Prostate gland (tissue), 2 donors: ENCODE measurements at regions of chr2 and their contacts with region 1.

Region 1: DNA sequence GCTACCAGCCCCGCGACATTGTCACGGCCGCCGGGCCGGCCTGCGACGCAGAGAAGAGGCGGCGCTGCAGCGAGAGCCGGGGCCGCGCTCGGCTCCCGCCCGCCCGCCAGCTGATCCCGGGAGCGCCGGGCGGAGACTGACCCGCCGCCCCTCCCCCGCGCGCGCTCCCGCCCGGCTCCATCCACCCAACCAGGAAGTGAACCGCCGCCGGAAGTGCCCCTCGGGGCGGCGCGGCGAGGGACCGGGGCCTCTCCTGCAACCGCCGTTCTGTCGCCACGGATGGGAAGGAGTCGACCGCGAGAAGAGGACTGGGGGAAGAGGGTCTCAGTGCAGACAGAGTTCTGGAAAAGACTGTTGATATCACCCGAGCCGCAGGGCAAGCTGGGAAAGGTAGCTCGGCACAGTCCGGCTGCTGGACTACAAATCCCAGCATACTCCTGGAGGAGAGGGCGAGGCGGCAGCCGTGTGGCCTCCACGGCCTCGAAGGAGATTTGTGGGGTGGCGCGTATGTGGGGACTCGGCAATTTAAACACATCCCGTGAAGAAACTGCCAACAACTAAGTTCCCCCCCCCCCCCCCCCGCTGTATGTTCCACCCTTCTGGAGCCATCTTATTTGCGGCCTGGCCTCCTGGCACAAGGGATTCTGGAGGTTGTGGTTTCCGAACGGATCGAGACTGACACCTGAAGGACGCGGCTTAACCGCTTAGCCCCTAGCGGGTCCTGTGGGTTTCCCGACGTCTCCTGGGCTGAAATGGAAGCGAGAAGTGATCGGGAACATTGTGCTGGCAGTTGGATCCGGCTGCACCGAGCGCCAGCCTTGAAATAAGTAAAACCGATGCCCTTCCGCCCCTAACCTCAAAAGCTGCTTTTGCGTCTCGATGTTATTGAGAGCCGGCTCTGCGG is at the start of gene AAK1:
- DNase-seq: peak; percentile 90
- H3K4me3 ChIP-seq: peak within 1 kb of the TSS; percentile 90 to 94
- H3K27ac ChIP-seq: peak within 1 kb of the TSS; percentile 97
- H3K4me1 ChIP-seq: peaks cover 7% of the 10 kb centered on the region
- H3K27me3 ChIP-seq: no peaks in the 10 kb centered on the region
- CTCF ChIP-seq: peak in 2 of 4 experiments; percentile 14 to 15
- POLR2A ChIP-seq: peak; percentile 81
- total RNA-seq, gene AAK1: 70.7 to 77.3 TPM

Region 2: DNA sequence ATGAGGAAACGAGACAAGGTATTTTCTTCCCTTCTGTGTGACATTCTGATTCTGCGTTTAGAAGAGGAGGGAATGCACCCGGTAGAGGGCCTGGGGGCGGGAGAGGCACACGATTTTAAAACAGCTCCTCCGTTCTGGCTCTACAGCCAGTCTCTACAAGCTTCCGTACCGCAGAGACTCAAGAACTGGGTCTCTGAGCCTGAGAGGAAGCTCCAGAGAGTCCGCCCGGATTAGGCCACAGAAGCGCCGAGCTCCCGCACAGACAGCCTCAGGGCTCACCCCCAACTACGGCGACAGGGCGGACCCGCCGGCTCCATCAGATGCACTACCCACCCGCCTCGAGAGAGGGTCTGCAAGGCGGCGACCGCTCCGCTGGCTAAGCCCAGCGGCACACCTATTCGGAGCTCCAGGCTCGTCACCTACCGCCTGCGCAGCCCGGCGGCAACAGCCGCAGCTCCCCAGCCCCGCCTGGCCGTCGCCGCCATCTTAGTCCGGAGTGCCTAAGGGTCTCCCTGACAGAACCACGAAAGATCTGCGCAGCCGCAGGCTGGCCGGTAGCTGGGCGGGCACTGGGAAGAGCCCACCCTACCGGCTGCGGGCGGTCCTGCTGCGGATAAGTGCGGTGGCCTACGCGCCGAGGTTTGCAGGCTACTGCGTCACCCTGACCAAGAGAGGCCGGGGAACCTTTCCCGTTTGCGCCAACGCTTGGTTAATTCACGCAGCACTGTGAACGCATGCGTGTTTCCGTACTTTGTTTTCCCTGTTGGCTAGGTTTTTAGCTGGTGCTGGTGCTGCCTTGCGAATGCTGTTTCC is 206.7 kb before region 1 on chr2 and contains the start of gene NFU1:
- intact Hi-C with region 1: loop called (anchors 2 kb)
- DNase-seq: peak; percentile 83
- H3K4me3 ChIP-seq: peak within 1 kb of the TSS; percentile 65 to 78
- H3K27ac ChIP-seq: peak within 1 kb of the TSS; percentile 96 to 98
- H3K4me1 ChIP-seq: no peaks in the 10 kb centered on the region
- H3K27me3 ChIP-seq: no peaks in the 10 kb centered on the region
- CTCF ChIP-seq: peak; percentile 28 to 78 (median 58)
- POLR2A ChIP-seq: peak; percentile 79
- total RNA-seq, gene NFU1: 33.4 to 42.0 TPM

Region 3: DNA sequence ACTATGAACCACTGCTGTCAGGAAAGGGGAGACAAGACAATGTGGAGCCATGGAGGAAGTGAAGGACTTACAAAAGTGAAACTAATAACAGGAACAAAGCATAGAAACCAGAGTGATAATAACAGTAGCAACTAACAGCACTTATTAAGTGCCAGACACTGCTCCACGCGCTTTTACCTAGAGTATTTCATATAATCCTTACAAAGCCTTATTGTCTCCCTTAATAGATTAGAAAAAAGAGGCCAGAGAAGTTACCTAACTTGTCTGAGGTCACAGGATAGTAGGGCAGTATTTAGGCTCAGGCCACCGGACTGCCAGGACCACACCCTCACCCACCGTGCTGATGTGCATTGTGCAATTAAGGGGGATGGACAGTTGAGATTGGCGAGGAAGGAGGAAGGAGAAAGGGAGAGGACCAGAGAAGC is 108.0 kb before region 1 on chr2:
- intact Hi-C with region 1: no loop called
- DNase-seq: no peak
- H3K4me3 ChIP-seq: no peak overlapping the region
- H3K27ac ChIP-seq: no peak overlapping the region
- H3K4me1 ChIP-seq: no peaks in the 10 kb centered on the region
- H3K27me3 ChIP-seq: no peaks in the 10 kb centered on the region
- CTCF ChIP-seq: no peak
- POLR2A ChIP-seq: no peak

Region 4: GRCh38 chr2:69667805-69668382 is 24.0 kb after region 1 on chr2:
- intact Hi-C with region 1: no loop called
- DNase-seq: peak; percentile 54
- H3K4me3 ChIP-seq: no peak overlapping the region
- H3K27ac ChIP-seq: peak overlapping the region in 1 of 2 donors; percentile 5
- H3K4me1 ChIP-seq: no peaks in the 10 kb centered on the region
- H3K27me3 ChIP-seq: no peaks in the 10 kb centered on the region
- CTCF ChIP-seq: no peak
- POLR2A ChIP-seq: no peak

Region 5: GRCh38 chr2:69724540-69725159 is 80.8 kb after region 1 on chr2:
- intact Hi-C with region 1: no loop called
- DNase-seq: peak; percentile 86
- H3K4me3 ChIP-seq: no peak overlapping the region
- H3K27ac ChIP-seq: no peak overlapping the region
- H3K4me1 ChIP-seq: no peaks in the 10 kb centered on the region
- H3K27me3 ChIP-seq: no peaks in the 10 kb centered on the region
- CTCF ChIP-seq: peak; percentile 75 to 96 (median 96)
- POLR2A ChIP-seq: no peak